ENCODE measurements at regions of chr18 and their contacts with region 1.

Region 1: DNA sequence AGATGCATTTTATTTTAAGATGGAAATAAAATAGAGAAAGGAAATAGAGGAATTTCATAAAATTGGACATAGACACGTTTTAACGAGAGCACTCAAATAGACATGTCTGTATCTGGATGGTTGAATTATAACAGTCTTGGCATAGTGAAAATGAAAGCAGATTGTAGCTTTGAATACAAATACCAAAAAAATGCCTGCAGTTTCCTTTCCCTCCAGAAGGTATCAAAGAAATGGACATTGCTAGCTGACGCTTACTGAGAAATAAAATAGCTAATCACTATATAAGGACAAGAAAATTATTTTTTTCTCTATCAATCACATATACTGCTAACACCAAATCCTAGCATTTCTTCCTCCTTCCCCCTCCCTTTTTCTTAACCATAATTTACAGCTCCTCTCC is 11.4 kb upstream of the MAPRE2 start:
- DNase-seq: no peak
- H3K4me3 ChIP-seq: no peak overlapping the region
- H3K27ac ChIP-seq: no peak overlapping the region
- H3K4me1 ChIP-seq: peaks cover 0 to 16% of the 10 kb centered on the region in 2 experiments; a peak in 2 of 4 replicates
- H3K27me3 ChIP-seq: no peaks in the 10 kb centered on the region
- CTCF ChIP-seq: no peak
- EP300 ChIP-seq: no peak
- RAD21 ChIP-seq: no peak

Region 2: DNA sequence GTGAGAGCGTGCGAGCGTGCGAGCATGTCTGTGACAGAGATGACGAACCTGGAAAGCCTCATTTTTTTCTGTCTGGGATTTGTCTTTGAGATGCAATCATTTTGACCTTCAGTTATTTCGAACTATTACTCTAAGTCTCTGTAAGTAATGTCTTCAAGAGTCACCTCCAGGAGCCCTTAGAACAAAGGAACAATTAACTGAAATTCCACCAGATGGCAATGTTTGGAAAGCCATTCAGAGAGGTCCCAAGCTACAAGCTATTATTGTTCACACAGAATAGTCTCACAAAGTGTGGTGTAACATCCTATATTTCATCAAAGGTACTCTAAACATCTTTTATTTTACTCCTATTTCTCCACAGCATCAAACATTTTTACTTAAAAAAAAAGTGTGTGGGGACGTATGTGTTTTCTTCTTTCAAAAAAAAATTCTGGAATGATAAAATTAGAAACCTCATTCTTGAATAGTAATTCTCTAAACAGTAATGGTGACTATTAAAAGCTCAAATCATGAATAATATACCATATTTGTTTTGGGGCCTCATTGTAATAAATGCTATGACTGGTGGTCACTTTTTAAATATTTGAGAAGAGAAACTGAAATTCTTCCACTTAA is 23.7 kb before region 1 on chr18:
- CTCF ChIA-PET with region 1: interaction called, 17 read pairs
- POLR2A ChIA-PET with region 1: no interaction called
- DNase-seq: peak; percentile 60
- H3K4me3 ChIP-seq: no peak overlapping the region
- H3K27ac ChIP-seq: no peak overlapping the region
- H3K4me1 ChIP-seq: no peaks in the 10 kb centered on the region; a peak in 1 of 4 replicates
- H3K27me3 ChIP-seq: no peaks in the 10 kb centered on the region
- CTCF ChIP-seq: peak; percentile 75
- EP300 ChIP-seq: no peak
- RAD21 ChIP-seq: peak; percentile 95

Region 3: DNA sequence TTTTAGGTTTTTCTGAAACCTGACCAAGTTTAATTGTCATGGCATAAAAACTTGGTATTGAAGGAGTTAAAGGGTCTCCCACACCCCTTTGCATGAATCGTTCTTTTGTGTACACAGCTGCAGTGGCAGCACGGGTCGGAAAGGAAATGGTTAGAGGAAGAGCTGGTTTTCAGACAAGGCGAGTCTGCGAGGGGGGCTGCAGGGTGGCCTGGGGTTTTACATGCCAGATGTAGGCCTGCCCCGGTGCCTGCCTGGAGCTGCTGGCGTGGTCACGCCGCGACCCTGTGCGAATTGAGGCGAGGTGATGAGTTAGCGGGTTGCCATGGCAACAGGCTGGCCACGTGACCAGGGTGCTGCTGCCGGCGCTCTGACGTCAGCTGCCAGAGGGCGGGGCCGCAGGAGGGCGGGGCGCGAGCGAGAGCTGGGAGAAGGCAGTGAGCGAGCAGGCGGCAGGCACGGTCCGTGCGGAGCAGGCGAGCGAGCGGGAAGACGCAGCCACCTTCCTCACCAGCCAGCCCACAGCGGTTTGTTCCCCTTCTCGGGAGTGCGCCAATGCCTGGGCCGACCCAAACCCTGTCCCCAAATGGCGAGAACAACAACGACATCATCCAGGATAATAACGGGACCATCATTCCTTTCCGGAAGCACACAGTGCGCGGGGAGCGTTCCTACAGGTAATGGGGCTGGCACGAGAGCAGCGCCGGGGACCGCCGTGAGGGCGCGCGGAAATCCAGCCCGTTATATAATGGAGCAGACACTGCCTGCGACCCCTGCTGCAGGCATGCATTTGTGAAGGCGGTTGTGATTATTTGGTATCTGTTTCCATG is 11.4 kb after region 1 on chr18 and contains the start of gene MAPRE2:
- CTCF ChIA-PET with region 1: interaction called, 18 read pairs
- POLR2A ChIA-PET with region 1: interaction called, 13 read pairs
- DNase-seq: peak; percentile 95
- H3K4me3 ChIP-seq: peak within 1 kb of the TSS; percentile 67 to 99
- H3K27ac ChIP-seq: peak within 1 kb of the TSS; percentile 79 to 98
- H3K4me1 ChIP-seq: peaks cover 20 to 25% of the 10 kb centered on the region in 2 experiments; a peak in 3 of 4 replicates
- H3K27me3 ChIP-seq: no peaks in the 10 kb centered on the region
- CTCF ChIP-seq: no peak; the same call in 1 of the 2 replicates
- EP300 ChIP-seq: peak in 1 of 2 experiments; percentile 51; a peak in 1 of 4 replicates
- RAD21 ChIP-seq: peak; percentile 29
- polyA plus RNA-seq, gene MAPRE2: 11.5 and 14.1 TPM in 2 replicates

Region 4: DNA sequence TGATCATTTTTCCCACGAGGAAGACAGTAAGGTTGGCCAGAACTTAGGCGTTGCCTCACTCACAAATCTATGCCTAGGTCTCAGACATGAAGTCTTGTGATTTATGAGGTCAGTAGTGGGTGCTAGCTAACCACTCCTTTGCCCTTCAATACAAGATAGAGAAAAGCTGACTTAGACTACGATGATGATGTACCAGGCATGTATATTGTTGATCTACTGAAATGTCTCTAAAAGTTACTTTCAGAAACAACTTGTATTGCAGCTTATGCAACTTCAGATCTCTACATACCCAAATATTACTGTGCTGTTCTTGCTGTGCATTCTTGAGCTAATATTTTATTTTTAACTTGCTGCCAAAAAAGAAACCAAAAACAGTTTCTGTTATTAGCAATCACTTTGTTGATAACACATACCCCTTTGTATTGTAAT is 42.1 kb after region 1 on chr18:
- CTCF ChIA-PET with region 1: interaction called, 14 read pairs
- POLR2A ChIA-PET with region 1: no interaction called
- DNase-seq: no peak
- H3K4me3 ChIP-seq: no peak overlapping the region
- H3K27ac ChIP-seq: no peak overlapping the region
- H3K4me1 ChIP-seq: peaks cover 4 to 23% of the 10 kb centered on the region in 2 experiments; a peak in 3 of 4 replicates
- H3K27me3 ChIP-seq: no peaks in the 10 kb centered on the region
- CTCF ChIP-seq: no peak
- EP300 ChIP-seq: no peak
- RAD21 ChIP-seq: no peak

Region 5: GRCh38 chr18:35231052-35231451 is 201.3 kb after region 1 on chr18:
- CTCF ChIA-PET with region 1: interaction called, 10 read pairs
- POLR2A ChIA-PET with region 1: no interaction called
- DNase-seq: peak; percentile 71
- H3K4me3 ChIP-seq: peak overlapping the region; percentile 32 to 42; a peak in 3 of 4 replicates
- H3K27ac ChIP-seq: no peak overlapping the region; a peak in 1 of 4 replicates
- H3K4me1 ChIP-seq: no peaks in the 10 kb centered on the region; a peak in 1 of 4 replicates
- H3K27me3 ChIP-seq: no peaks in the 10 kb centered on the region
- CTCF ChIP-seq: peak; percentile 92
- EP300 ChIP-seq: no peak; a peak in 1 of 4 replicates
- RAD21 ChIP-seq: peak; percentile 92

Region 6: GRCh38 chr18:35355140-35355618 is 325.4 kb after region 1 on chr18:
- CTCF ChIA-PET with region 1: interaction called, 21 read pairs
- POLR2A ChIA-PET with region 1: no interaction called
- DNase-seq: peak; percentile 72
- H3K4me3 ChIP-seq: peak overlapping the region in 1 of 2 experiments; percentile 25; a peak in 3 of 4 replicates
- H3K27ac ChIP-seq: no peak overlapping the region; a peak in 1 of 4 replicates
- H3K4me1 ChIP-seq: peaks cover 0 to 2% of the 10 kb centered on the region in 2 experiments; a peak in 1 of 4 replicates
- H3K27me3 ChIP-seq: no peaks in the 10 kb centered on the region
- CTCF ChIP-seq: peak; percentile 71
- EP300 ChIP-seq: no peak
- RAD21 ChIP-seq: peak; percentile 73

Measured in SK-N-SH (cell line).